Activated CD8-positive, alpha-beta T cell treated with anti-CD3 and anti-CD28 coated beads for 36 hours (primary cell): ENCODE measurements at regions of chr6 and their contacts with region 1.

Region 1: GRCh38 chr6:77740380-77740779 is 87.5 kb downstream of the MEI4 start:
- DNase-seq: no peak
- ATAC-seq: no peak
- H3K4me3 Mint-ChIP-seq: no peak overlapping the region
- H3K27ac Mint-ChIP-seq: no peak overlapping the region
- H3K4me1 Mint-ChIP-seq: no peaks in the 10 kb centered on the region
- H3K27me3 Mint-ChIP-seq: no peaks in the 10 kb centered on the region
- CTCF ChIP-seq: peak; percentile 25

Region 2: DNA sequence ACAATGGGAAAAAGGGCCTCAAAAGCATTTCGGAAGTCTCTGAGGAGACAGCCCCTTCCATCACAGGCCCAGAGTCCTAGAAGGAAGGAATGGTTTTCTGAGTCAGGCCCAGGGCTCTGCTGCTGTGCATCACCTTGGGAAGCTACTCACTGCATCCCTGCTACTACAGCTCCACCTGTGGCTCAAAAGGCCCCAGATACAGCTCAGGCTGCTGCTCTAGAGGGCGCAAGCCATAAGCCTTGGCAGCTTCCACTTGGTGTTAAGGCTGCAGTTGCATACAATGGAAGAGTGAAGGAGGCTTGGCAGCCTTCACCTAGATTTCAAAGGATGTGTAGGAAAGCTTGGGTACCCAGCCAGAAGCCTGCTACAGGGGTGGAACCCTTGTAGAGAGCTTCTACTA is 32.8 kb before region 1 on chr6:
- CTCF ChIA-PET with region 1: no interaction called
- POLR2A ChIA-PET with region 1: no interaction called
- intact Hi-C with region 1: loop called (anchors 2 kb)
- DNase-seq: no peak
- ATAC-seq: no peak
- H3K4me3 Mint-ChIP-seq: no peak overlapping the region
- H3K27ac Mint-ChIP-seq: no peak overlapping the region
- H3K4me1 Mint-ChIP-seq: no peaks in the 10 kb centered on the region
- H3K27me3 Mint-ChIP-seq: no peaks in the 10 kb centered on the region
- CTCF ChIP-seq: no peak